ENCODE measurements at regions of chr7 and their contacts with region 1.

Region 1: GRCh38 chr7:131859147-131859821 is 302.9 kb upstream of the PODXL start:
- DNase-seq: peak; percentile 82

Region 2: DNA sequence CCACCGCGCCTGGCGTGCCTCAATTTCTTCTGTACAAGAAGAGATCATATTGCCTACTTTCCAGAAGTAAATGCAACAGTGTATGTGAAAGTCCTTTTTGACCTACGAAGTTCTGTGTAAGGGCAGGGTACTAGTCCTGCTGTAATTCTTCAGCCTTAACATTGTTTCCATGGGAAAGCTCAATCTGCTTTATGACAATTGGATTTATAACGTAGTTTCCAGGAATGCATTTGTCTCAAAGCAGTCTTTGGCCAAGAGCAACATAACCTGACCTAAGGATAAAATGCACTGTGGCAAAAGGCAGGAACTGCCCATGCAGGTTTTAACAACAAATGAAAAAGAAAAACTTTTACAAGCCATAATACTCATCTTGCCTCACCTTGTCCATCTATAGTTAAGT is 194.7 kb before region 1 on chr7:
- CTCF ChIA-PET with region 1: no interaction called
- POLR2A ChIA-PET with region 1: no interaction called
- DNase-seq: no peak

Region 3: DNA sequence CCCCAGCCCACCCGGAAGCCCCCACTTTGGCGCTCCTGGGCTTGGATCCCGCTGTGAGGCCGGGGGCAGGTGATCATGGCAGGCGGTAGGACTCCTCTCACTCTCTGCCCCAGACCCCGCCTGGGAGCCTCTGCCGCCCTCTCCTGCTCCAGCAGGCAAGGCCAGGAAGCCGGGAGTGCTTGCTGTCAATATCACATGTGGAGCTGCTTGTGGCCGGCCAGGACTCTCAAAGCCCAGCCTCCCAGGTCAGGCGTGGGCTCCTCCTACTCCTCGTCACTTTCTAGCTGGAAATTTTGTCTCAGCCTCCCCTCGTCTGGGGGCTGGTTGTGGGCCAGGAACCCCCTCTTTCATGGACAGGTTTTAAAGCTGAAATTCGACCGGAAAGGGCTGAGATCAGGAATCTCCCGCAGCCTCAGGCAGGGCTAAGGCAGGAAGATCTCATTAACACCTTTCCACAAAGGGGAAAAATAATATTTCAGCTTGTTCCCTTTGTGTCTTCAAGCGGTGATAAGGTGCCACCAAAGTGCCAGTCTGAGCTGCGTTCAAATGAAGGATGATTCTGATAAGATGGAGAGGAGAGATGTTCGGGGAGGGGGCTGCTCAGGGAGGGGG is 29.2 kb before region 1 on chr7:
- CTCF ChIA-PET with region 1: no interaction called
- POLR2A ChIA-PET with region 1: no interaction called
- DNase-seq: no peak

Region 4: GRCh38 chr7:131844369-131844768 is 14.9 kb before region 1 on chr7:
- CTCF ChIA-PET with region 1: interaction called, 10 read pairs
- POLR2A ChIA-PET with region 1: no interaction called
- DNase-seq: no peak

Region 5: DNA sequence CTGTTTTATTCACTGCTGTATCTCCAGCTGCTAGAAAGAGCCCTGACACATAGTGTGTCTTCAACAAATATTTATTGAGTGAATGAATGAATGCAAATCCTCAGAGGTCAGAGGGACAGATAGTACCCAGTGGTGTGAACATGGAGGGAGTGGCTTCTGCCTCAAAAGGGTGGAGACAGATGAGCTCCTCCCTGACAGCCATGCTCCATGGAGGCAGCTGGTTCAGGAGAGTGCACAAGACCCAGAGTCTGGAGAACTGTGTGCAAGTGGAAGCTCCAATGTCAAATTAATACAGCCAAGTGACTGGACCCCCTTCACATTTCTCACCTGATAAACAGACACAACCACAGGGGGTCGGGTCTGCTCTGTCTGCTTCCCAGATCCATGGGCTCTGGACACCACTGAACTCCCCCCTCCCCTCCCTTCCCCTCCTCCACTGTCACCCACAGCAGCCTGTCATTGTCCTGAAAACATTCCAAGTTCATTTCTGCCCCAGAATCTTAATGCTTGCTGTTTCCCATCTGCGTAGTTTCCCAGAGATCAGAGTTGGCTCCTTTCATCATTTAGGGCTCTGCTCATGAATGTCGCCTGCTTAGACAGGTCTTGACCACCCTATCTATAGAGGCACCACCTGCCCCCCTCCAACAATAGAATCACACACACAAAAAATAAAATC is 10.0 kb after region 1 on chr7:
- CTCF ChIA-PET with region 1: interaction called, 10 read pairs
- POLR2A ChIA-PET with region 1: no interaction called
- DNase-seq: no peak

Region 6: DNA sequence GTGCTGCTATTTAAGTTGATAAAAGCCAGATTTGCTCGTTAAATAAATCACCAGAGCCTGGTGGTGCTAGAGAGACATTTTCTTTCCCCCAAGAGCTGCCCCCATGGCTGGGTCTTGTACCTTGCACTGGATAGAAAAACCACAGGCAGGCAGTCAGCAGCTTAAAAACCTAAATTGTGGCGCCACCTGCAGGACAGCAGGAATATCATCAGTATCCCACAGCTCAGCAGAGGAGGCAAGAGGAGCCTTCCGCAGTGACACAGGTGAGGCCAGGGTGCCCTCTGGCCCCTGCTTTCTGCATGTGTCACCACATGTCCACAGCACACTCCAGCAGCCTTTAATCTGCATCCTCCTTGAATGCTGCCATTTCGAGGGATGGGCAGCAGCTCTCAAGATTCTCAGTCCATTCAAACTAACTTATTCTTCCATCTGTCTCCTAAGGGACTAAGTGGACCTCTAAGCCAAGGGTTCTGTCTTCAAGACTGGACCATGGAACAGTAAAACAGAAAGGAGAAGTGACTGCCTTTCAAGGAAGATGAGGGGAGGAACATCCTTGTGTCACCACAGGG is 721.5 kb after region 1 on chr7:
- CTCF ChIA-PET with region 1: interaction called, 14 read pairs
- POLR2A ChIA-PET with region 1: no interaction called
- DNase-seq: peak; percentile 70

Measured in HEK293T (cell line).